GM12878 (cell line): ENCODE measurements at regions of chr17 and their contacts with region 1.

Region 1: GRCh38 chr17:75034236-75034908 is 12.4 kb downstream of the ATP5PD start:
- DNase-seq: peak; percentile 88
- ATAC-seq: peak; percentile 86
- H3K4me3 ChIP-seq: peak overlapping the region; percentile 84
- H3K27ac ChIP-seq: peak overlapping the region; percentile 72
- H3K4me1 ChIP-seq: 0 out of 2 replicates have a peak, but pooled peaks cover 4% of the 10 kb centered on the region
- H3K27me3 ChIP-seq: no peaks in the 10 kb centered on the region
- CTCF ChIP-seq: no peak
- EP300 ChIP-seq: no peak; a peak in 1 of 4 replicates
- POLR2A ChIP-seq: no peak; the same call in none of the 2 replicates
- RAD21 ChIP-seq: no peak

Region 2: DNA sequence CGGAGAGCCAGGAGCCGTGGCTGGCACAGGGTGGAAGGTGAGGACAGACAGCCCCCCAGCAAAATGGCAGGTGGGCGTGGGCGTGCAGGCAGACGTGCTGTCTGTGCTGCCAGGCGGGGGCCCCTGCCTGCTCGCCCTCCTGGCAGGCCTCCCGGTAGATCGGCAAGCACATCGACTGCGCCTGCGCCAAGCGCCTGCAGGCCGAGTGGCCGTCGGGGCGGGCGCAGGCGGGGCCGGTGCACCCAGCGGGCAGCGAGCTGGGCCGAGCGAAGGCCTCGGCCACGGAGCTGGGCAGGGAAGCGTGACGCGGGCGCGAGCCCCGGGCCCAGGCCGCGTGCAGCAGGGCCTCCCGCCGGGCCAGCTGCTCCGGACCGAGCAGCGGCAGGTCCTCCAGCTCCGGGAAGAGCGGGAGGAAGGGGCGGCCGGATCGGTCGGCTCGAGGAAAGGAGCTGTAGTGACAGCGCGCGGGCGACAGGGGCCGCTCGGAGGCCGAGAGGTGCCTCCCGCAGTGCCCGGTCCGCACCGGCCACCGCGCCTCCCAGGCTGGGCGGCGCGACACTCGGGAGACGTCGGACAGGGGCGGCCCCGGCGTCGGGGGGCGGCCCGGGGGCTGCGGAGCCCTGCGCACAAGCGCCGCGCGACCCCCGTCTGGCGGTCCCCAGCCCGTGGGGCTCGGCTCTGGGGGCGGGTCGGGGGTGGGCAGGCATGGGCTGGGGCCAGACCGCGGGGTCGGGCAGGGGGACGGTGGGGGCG is 191.6 kb before region 1 on chr17:
- CTCF ChIA-PET with region 1: no interaction called
- POLR2A ChIA-PET with region 1: no interaction called
- RAD21 ChIA-PET with region 1: no interaction called
- SMC1A ChIA-PET with region 1: no interaction called
- in situ Hi-C with region 1: no loop called
- intact Hi-C with region 1: no loop called
- DNase-seq: no peak
- ATAC-seq: peak; percentile 76
- H3K4me3 ChIP-seq: no peak overlapping the region
- H3K27ac ChIP-seq: no peak overlapping the region
- H3K4me1 ChIP-seq: peaks cover 4% of the 10 kb centered on the region
- H3K27me3 ChIP-seq: no peaks in the 10 kb centered on the region
- CTCF ChIP-seq: peak; percentile 20 to 45 (median 29); a peak in 3 of 6 replicates
- EP300 ChIP-seq: no peak
- POLR2A ChIP-seq: no peak
- RAD21 ChIP-seq: no peak

Region 3: GRCh38 chr17:74998783-74999182 is 35.6 kb before region 1 on chr17:
- CTCF ChIA-PET with region 1: no interaction called
- POLR2A ChIA-PET with region 1: no interaction called
- RAD21 ChIA-PET with region 1: no interaction called
- SMC1A ChIA-PET with region 1: no interaction called
- in situ Hi-C with region 1: no loop called
- intact Hi-C with region 1: no loop called
- DNase-seq: no peak
- ATAC-seq: no peak
- H3K4me3 ChIP-seq: no peak overlapping the region
- H3K27ac ChIP-seq: no peak overlapping the region
- H3K4me1 ChIP-seq: no peaks in the 10 kb centered on the region
- H3K27me3 ChIP-seq: no peaks in the 10 kb centered on the region
- CTCF ChIP-seq: no peak
- EP300 ChIP-seq: no peak
- POLR2A ChIP-seq: no peak
- RAD21 ChIP-seq: no peak

Region 4: GRCh38 chr17:75012346-75013091 is 21.9 kb before region 1 on chr17 and contains the start of gene MRPL58:
- CTCF ChIA-PET with region 1: interaction called, 15 read pairs
- POLR2A ChIA-PET with region 1: interaction called, 11 read pairs
- RAD21 ChIA-PET with region 1: interaction called, 5 read pairs
- SMC1A ChIA-PET with region 1: interaction called, 9 read pairs
- in situ Hi-C with region 1: no loop called
- intact Hi-C with region 1: no loop called
- DNase-seq: peak; percentile 60
- ATAC-seq: peak; percentile 95
- H3K4me3 ChIP-seq: peak within 1 kb of the TSS; percentile 94
- H3K27ac ChIP-seq: peak within 1 kb of the TSS; percentile 67
- H3K4me1 ChIP-seq: peaks cover 8% of the 10 kb centered on the region
- H3K27me3 ChIP-seq: no peaks in the 10 kb centered on the region; a peak in 1 of 4 replicates
- CTCF ChIP-seq: peak in 2 of 3 experiments; percentile 22 to 54; a peak in 4 of 6 replicates
- EP300 ChIP-seq: no peak
- POLR2A ChIP-seq: peak; percentile 99
- RAD21 ChIP-seq: no peak
- polyA plus RNA-seq, gene MRPL58: 23.0 to 43.7 TPM

Region 5: GRCh38 chr17:75046582-75047289 is 12.4 kb after region 1 on chr17 and contains the starts of genes ATP5PD and KCTD2:
- CTCF ChIA-PET with region 1: interaction called, 7 read pairs
- POLR2A ChIA-PET with region 1: interaction called, 4 read pairs
- RAD21 ChIA-PET with region 1: interaction called, 5 read pairs
- SMC1A ChIA-PET with region 1: interaction called, 7 read pairs
- in situ Hi-C with region 1: no loop called
- intact Hi-C with region 1: loop called (anchors 1 kb)
- DNase-seq: peak; percentile 86
- ATAC-seq: peak; percentile 98
- H3K4me3 ChIP-seq: peak within 1 kb of the TSS; percentile 97
- H3K27ac ChIP-seq: peak within 1 kb of the TSS; percentile 71
- H3K4me1 ChIP-seq: peaks cover 3% of the 10 kb centered on the region
- H3K27me3 ChIP-seq: no peaks in the 10 kb centered on the region
- CTCF ChIP-seq: 0 out of 6 replicates have a peak, but pooled peaks of 1 of the 3 experiments have one; percentile 6
- EP300 ChIP-seq: no peak
- POLR2A ChIP-seq: peak; percentile 96
- RAD21 ChIP-seq: no peak
- polyA plus RNA-seq, gene ATP5PD: 710 to 772 TPM
- polyA plus RNA-seq, gene KCTD2: 1.5 to 2.2 TPM

Region 6: DNA sequence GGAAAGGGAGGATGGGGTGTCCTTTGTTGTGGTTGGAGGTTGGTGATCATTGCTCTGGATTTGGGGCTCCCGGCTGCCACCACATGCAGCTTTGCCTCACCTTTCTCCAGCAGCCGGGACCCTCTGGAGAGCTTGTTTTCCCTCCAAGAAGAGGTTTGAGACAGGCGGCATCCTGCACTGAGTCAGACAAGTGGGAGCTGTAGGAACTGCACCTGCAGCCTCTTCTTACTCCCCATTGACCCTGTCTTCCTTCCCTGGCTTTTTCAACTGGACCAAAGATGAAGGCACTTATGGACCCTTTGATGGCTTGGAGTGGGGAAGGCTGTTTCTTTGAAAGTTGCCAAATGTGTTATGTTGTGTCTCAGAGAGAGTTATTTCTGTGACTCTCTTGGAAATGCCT is 29.3 kb after region 1 on chr17:
- CTCF ChIA-PET with region 1: no interaction called
- POLR2A ChIA-PET with region 1: no interaction called
- RAD21 ChIA-PET with region 1: no interaction called
- SMC1A ChIA-PET with region 1: no interaction called
- in situ Hi-C with region 1: no loop called
- intact Hi-C with region 1: no loop called
- DNase-seq: no peak
- ATAC-seq: no peak
- H3K4me3 ChIP-seq: no peak overlapping the region
- H3K27ac ChIP-seq: no peak overlapping the region
- H3K4me1 ChIP-seq: peaks cover 15% of the 10 kb centered on the region
- H3K27me3 ChIP-seq: no peaks in the 10 kb centered on the region
- CTCF ChIP-seq: no peak
- EP300 ChIP-seq: no peak
- POLR2A ChIP-seq: no peak
- RAD21 ChIP-seq: no peak

Region 7: DNA sequence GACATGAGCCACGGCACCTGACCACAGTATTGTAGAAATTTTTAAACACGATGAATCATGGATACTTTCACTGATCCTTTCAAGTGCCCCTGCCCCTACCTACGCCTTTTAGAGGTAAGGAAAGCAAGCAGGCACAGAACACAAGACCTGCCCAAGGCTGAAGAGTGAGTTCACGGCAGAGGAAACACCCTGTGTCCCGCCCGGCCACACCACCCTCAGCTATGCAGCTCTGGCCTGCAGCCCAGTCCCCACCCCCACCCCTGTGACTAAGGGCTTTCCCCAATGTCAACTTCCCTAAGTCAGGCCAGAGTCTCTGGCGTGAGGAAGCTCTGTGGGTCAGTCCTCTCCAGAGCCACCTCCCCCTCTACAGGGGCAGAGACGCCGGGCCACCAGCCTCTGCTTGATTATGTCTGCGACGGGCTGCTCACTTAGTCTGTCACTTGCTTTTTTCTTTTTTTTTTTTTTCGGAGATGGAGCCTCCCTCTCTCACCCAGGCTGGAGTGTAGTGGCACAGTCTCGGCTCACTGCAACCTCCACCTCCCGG is 61.8 kb after region 1 on chr17:
- CTCF ChIA-PET with region 1: no interaction called
- POLR2A ChIA-PET with region 1: no interaction called
- RAD21 ChIA-PET with region 1: no interaction called
- SMC1A ChIA-PET with region 1: no interaction called
- in situ Hi-C with region 1: no loop called
- intact Hi-C with region 1: no loop called
- DNase-seq: no peak
- ATAC-seq: peak; percentile 75
- H3K4me3 ChIP-seq: no peak overlapping the region
- H3K27ac ChIP-seq: no peak overlapping the region
- H3K4me1 ChIP-seq: no peaks in the 10 kb centered on the region; the same call in 1 of the 2 replicates
- H3K27me3 ChIP-seq: no peaks in the 10 kb centered on the region
- CTCF ChIP-seq: no peak
- EP300 ChIP-seq: no peak
- POLR2A ChIP-seq: no peak
- RAD21 ChIP-seq: no peak

Region 8: DNA sequence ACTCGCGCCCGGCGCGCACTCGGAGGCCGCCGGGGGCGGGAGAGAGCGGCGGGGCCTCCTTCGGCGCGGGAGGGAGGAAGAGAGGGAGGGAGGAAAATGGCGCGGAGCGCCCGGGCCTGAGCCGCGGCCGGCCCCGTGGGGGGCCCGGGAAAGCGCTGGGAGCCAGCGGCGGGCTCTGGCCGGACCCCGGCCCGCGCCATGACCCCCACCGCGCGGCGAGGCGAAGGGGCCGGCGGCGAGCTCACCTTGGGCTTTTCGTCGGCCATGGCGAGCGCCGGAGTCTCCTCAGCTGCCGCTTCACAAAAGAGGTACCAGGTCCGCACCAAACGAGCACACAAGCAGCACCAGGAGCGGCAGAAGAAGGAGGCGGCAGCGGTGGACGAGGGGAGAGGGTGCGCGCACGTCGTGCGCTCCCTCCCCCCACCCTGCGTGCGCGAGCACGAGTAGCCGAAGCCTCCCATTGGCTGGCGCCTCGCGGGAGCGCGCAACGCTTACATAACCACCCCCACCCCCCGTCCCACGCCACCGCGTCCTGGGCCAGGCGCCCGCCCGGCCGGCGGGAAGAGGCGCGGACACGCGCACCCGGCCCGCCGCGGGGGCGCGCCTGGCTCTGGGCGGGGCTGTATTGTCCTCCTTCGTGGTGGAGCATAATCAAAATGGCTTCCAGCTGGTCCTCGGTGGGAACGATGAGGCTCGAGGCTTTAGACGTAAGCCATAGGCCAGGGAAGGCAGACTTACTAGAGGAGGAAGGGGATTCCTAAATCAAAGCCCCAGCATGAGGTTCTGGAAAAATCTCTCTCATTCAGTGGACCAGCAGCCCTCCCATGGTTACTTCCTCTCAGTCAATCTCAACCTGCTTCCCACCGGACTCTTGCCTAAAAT is 148.4 kb after region 1 on chr17 and contains the start of gene SUMO2:
- CTCF ChIA-PET with region 1: no interaction called
- POLR2A ChIA-PET with region 1: no interaction called
- RAD21 ChIA-PET with region 1: no interaction called
- SMC1A ChIA-PET with region 1: no interaction called
- in situ Hi-C with region 1: no loop called
- intact Hi-C with region 1: loop called (anchors 5 kb)
- DNase-seq: peak; percentile 85
- ATAC-seq: peak; percentile 86
- H3K4me3 ChIP-seq: peak within 1 kb of the TSS; percentile 92
- H3K27ac ChIP-seq: peak within 1 kb of the TSS; percentile 95
- H3K4me1 ChIP-seq: no peaks in the 10 kb centered on the region
- H3K27me3 ChIP-seq: no peaks in the 10 kb centered on the region
- CTCF ChIP-seq: peak; percentile 9 to 43 (median 15); a peak in 3 of 6 replicates
- EP300 ChIP-seq: no peak
- POLR2A ChIP-seq: peak; percentile 94
- RAD21 ChIP-seq: no peak
- polyA plus RNA-seq, gene SUMO2: 709 to 767 TPM